Left cardiac atrium (tissue), 4 donors: ENCODE measurements at regions of chr2 and their contacts with region 1.

Region 1: DNA sequence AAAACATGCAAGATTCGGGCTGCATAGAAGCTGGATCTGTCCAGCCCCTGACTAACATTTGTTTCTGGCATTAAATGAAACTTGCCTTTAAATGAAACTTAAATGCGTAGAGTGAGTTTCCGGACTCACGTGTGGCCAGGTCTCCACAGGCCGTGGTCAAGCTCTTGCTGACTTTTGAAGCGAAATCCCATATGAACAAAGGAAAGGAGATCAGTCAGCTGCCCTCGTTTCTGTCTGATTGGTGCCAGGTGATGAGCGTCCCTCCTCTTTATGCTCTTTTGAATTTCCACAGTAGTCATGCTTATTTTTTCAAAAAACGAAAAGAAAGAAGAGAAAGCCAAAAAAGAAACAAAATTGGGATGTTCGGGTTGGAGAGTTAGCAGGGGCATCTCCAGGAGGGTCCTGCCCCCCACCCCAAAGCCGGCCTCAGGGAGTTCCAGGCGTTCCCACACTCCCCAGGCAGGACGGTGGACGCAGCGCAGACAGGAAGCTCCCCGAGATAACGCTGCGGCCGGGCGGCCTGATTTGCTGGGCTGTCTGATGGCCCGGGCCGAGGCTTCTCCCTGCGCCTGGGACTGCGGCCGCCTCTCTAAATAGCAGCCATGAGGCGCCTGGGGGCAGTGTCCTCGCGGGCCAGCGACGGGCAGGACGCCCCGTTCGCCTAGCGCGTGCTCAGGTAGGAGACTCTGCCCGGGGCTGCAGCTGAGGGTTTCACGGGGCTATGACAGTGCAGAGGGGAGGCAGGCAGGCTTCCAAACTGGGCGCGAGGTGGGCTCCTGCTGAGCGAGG is at the start of gene COLEC11:
- DNase-seq: peak; percentile 84
- ATAC-seq: peak; percentile 92 to 96
- total RNA-seq, gene COLEC11: 3.3 to 25.0 TPM

Region 2: DNA sequence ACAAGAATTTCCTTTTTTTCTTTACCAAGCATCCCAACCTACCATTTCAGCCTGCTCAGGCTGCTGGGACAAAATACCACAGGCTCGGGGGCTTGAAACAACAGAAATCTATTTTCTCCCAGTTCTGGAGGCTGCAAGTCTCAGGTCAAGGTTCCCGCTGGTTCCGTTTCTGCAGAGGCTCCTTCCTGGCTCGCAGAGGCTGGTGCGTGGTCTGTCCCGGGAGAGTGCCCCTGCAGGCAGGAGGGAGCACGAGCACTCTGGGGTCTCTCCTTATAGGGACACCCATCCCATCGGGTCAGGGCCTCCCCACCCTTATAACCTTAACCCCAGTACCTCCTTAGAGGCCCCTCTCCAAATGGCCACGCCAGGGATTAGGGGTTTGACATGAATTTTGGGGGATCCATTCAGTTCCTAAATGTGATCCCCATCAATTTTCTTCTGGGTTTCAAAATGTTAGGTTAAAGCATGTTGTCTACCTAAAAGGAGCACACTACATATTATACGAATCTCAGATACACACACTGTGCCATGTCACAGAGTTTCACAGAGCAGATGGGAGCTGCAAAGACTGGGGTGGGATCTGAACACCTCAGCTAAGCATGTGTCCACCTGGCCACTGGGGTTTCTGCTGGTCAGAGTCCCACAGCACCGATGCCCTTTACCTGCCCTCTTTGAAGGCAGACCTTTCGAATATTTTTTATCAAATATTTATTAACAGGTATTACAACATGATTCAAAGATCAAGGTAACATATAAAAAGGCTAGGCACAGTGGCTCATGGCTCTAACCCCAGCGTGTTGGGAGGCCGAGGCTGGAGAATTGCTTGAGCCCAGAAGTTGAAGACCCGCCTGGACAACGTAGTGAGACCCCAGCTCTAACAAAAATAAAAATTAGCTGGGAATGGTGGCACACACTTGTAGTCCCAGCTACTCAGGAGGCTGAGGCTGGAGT is 57.7 kb before region 1 on chr2:
- intact Hi-C with region 1: no loop called
- DNase-seq: peak; percentile 68
- ATAC-seq: peak; percentile 58 to 74

Region 3: DNA sequence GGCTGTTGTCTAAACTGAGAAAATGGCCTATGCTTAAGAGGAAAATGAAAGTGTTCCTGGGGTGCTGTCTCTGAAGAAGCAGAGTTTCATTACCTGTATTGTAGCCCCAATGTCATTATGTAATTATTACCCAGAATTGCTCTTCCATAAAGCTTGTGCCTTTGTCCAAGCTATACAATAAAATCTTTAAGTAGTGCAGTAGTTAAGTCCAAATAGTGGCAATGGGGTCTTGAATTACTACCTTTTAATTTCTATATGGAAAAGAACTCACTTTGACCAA is 49.5 kb after region 1 on chr2:
- intact Hi-C with region 1: loop called in 1 of 2 experiments (anchors 10 kb)
- DNase-seq: no peak
- ATAC-seq: no peak

Region 4: DNA sequence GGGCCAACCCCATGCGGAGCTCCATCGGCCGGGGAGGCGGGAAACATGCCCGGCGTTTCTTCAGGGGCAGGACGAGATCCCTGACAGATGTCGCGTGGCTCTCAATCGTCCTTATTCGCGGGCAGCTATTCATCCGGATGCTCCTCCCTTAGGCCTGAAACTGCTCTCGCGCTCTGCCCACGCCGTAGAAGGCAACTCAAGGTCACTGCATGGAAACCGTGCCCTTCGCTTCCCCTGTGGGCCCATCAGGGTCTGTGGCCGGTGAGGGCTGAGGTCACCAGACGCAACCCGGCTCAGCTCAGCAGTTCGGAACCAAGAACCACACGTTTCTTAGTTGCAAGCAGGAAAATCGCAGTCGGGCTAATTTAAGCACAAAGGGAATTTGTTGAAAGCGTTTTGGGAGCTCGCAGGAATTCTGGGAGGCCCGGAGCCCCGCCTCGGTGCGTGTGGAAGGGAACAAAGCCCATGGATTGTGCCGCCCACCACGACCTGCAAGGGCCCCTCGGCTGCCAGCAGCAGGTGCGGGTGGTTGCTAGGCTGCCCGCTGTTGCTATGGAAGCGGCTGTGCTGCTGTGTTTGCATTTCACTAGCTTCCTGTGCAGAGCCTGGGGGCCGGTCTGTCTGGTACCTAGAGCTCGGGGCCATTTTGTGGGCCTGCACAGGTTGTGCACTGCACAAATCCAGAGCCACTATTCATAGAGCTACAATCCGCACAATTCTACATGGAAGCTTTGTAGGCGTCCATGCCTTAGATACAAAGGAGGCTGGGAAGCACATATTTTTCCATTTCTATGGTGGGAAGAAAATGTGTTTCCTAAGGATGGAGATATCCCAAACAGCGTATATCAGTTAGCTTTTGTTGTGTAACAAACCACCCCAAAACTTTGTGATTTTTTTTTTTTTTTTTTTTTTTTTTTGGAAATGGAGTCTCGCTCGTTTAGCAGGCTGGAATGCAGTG is 57.3 kb after region 1 on chr2:
- intact Hi-C with region 1: loop called (anchors 5 to 10 kb)
- DNase-seq: peak; percentile 51
- ATAC-seq: peak; percentile 58 to 68